ENCODE measurements at regions of chr21 and their contacts with region 1.

Region 1: DNA sequence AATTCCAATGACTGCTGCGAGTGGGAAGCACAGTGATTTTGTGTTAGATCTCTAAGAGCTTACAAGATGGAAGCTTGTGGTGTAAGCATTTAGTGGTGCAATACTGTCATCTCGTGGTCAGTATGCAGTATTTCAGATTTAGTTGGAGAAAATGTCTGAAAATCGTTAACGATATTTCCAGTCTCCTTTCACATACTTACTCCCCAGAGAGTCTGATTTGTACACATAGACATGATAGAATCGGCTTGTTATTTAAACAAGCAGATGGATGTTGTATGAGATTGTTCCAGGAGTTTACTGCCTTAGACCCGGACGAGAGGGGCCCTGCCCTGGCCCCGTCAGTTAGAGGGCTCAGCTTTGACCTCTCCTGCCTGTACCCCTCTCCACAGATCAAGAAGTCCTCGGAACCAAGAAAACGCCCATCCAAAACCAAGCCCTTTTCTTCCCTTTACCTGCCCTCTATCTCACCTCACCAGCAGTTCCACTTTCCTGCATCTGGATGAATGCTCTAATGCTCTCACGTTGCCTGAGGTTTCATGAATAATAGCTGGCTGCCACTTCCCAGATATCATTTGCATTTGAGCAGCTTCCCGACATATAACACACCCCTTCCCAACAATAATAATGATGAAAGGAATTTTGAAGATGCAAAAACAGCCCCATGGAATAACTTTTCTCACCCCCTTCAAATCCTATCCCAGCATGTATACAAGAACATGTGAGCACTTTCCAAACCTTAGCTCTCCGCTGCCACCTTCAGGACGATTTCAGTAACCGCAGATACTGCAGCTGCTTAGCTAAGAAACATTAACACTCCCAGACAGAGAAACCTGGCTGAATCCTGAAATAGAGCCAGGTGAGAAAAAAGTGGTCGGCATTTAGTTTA is 247.3 kb downstream of the LTN1 start:
- DNase-seq: peak; percentile 52
- H3K4me3 ChIP-seq: peak overlapping the region; percentile 38 to 47
- H3K27ac ChIP-seq: peak overlapping the region; percentile 22 to 81; a peak in 3 of 4 replicates
- H3K4me1 ChIP-seq: peaks cover 0 to 15% of the 10 kb centered on the region in 2 experiments; a peak in 2 of 4 replicates
- H3K27me3 ChIP-seq: no peaks in the 10 kb centered on the region
- CTCF ChIP-seq: peak; percentile 91
- EP300 ChIP-seq: peak in 1 of 2 experiments; percentile 38; a peak in 1 of 4 replicates
- RAD21 ChIP-seq: peak; percentile 100

Region 2: DNA sequence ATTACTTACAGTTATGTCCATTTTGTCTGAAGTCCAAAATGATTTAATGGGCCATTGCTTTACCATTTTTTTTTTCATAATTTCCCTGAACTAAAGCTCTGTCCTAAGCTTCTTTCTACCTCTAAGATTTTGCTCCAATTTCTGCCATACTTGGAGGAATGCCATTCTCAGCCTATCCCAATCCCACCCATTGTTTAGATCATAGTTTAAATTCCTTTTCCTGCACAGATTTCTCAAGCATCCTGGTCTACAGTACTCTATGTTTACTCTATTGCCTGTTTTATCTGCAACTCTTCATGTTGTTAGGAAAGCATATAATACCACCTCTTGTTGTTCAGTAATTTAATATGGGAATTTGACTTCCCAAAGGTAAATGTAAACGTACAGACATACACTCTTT is 1931.0 kb before region 1 on chr21:
- CTCF ChIA-PET with region 1: interaction called, 16 read pairs
- POLR2A ChIA-PET with region 1: no interaction called
- DNase-seq: no peak
- H3K4me3 ChIP-seq: no peak overlapping the region
- H3K27ac ChIP-seq: no peak overlapping the region
- H3K4me1 ChIP-seq: no peaks in the 10 kb centered on the region
- H3K27me3 ChIP-seq: no peaks in the 10 kb centered on the region
- CTCF ChIP-seq: no peak
- EP300 ChIP-seq: no peak
- RAD21 ChIP-seq: no peak

Region 3: GRCh38 chr21:26881504-26882228 is 1863.7 kb before region 1 on chr21:
- CTCF ChIA-PET with region 1: interaction called, 14 read pairs
- POLR2A ChIA-PET with region 1: no interaction called
- DNase-seq: peak; percentile 39
- H3K4me3 ChIP-seq: no peak overlapping the region
- H3K27ac ChIP-seq: peak overlapping the region in 1 of 2 experiments; percentile 16; a peak in 1 of 4 replicates
- H3K4me1 ChIP-seq: no peaks in the 10 kb centered on the region; a peak in 1 of 4 replicates
- H3K27me3 ChIP-seq: no peaks in the 10 kb centered on the region
- CTCF ChIP-seq: peak; percentile 67
- EP300 ChIP-seq: peak in 1 of 2 experiments; percentile 63; a peak in 1 of 4 replicates
- RAD21 ChIP-seq: peak; percentile 72

Region 4: GRCh38 chr21:27700974-27701614 is 1044.3 kb before region 1 on chr21:
- CTCF ChIA-PET with region 1: interaction called, 67 read pairs
- POLR2A ChIA-PET with region 1: interaction called, 3 read pairs
- DNase-seq: peak; percentile 59
- H3K4me3 ChIP-seq: peak overlapping the region in 1 of 2 experiments; percentile 42; a peak in 1 of 4 replicates
- H3K27ac ChIP-seq: peak overlapping the region in 1 of 2 experiments; percentile 44; a peak in 1 of 4 replicates
- H3K4me1 ChIP-seq: peaks cover 0 to 2% of the 10 kb centered on the region in 2 experiments; a peak in 2 of 4 replicates
- H3K27me3 ChIP-seq: no peaks in the 10 kb centered on the region
- CTCF ChIP-seq: peak; percentile 86
- EP300 ChIP-seq: no peak
- RAD21 ChIP-seq: peak; percentile 97

Region 5: GRCh38 chr21:28357743-28358142 is 387.6 kb before region 1 on chr21:
- CTCF ChIA-PET with region 1: interaction called, 19 read pairs
- POLR2A ChIA-PET with region 1: no interaction called
- DNase-seq: no peak
- H3K4me3 ChIP-seq: no peak overlapping the region
- H3K27ac ChIP-seq: peak overlapping the region in 1 of 2 experiments; percentile 100; a peak in 2 of 4 replicates
- H3K4me1 ChIP-seq: peaks cover 0 to 11% of the 10 kb centered on the region in 2 experiments; a peak in 2 of 4 replicates
- H3K27me3 ChIP-seq: no peaks in the 10 kb centered on the region
- CTCF ChIP-seq: no peak
- EP300 ChIP-seq: no peak
- RAD21 ChIP-seq: no peak

Region 6: DNA sequence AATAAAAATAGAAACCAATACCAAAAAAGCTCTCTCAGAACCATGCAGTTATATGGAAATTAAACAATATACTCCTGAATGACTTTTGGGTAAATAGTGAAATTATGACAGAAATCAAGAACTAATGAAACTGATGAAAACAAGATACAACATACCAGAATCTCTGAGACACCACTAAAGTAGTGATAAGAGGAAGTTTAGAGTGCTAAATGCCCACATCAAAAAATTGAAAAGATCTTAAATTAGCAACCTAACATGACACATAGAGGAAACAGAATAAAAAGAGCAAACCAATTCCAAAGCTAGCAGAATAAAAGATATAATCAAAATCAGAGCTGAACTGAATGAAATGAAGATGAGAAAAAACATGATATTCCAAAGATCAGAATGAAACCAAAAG is 183.6 kb before region 1 on chr21:
- CTCF ChIA-PET with region 1: no interaction called
- POLR2A ChIA-PET with region 1: no interaction called
- DNase-seq: no peak
- H3K4me3 ChIP-seq: no peak overlapping the region
- H3K27ac ChIP-seq: no peak overlapping the region
- H3K4me1 ChIP-seq: no peaks in the 10 kb centered on the region
- H3K27me3 ChIP-seq: no peaks in the 10 kb centered on the region
- CTCF ChIP-seq: no peak
- EP300 ChIP-seq: no peak
- RAD21 ChIP-seq: no peak

Region 7: GRCh38 chr21:28932717-28933116 is 187.3 kb after region 1 on chr21:
- CTCF ChIA-PET with region 1: interaction called, 29 read pairs
- POLR2A ChIA-PET with region 1: no interaction called
- DNase-seq: no peak
- H3K4me3 ChIP-seq: no peak overlapping the region
- H3K27ac ChIP-seq: no peak overlapping the region
- H3K4me1 ChIP-seq: no peaks in the 10 kb centered on the region; a peak in 1 of 4 replicates
- H3K27me3 ChIP-seq: no peaks in the 10 kb centered on the region
- CTCF ChIP-seq: no peak
- EP300 ChIP-seq: no peak
- RAD21 ChIP-seq: no peak

Region 8: DNA sequence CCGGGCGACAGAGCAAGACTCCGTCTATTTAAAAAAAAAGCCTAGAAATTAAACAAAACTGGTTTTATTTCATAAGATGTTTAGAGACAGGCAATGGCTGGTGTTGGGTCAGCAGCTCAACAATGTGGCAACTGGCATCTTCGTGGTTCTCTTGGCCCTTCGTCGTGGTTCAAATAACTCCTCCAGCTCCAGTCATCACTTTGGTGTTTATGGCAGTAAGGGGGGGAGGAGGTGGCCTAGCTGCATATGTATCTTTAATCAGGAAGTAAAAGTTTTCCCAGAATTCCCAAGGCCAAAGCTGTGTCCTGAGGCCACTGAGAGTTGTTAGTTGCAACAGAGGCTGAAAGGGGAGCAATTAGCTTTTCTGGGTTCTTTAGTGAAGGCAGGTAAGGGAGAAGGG is 260.3 kb after region 1 on chr21:
- CTCF ChIA-PET with region 1: no interaction called
- POLR2A ChIA-PET with region 1: no interaction called
- DNase-seq: no peak
- H3K4me3 ChIP-seq: no peak overlapping the region
- H3K27ac ChIP-seq: no peak overlapping the region
- H3K4me1 ChIP-seq: peaks cover 0 to 3% of the 10 kb centered on the region in 2 experiments; a peak in 2 of 4 replicates
- H3K27me3 ChIP-seq: no peaks in the 10 kb centered on the region
- CTCF ChIP-seq: no peak
- EP300 ChIP-seq: no peak
- RAD21 ChIP-seq: no peak